Activated naive CD4-positive, alpha-beta T cell treated with anti-CD3 and anti-CD28 coated beads for 36 hours (primary cell): ENCODE measurements at regions of chr4 and their contacts with region 1.

Region 1: GRCh38 chr4:151760712-151761527 is at the start of gene GATB:
- DNase-seq: peak; percentile 95
- H3K4me3 Mint-ChIP-seq: peak within 1 kb of the TSS; percentile 99
- H3K27ac Mint-ChIP-seq: peak within 1 kb of the TSS; percentile 89
- H3K4me1 Mint-ChIP-seq: peaks cover 13% of the 10 kb centered on the region
- H3K27me3 Mint-ChIP-seq: no peaks in the 10 kb centered on the region
- total RNA-seq, gene GATB: 15.2 to 22.1 TPM

Region 2: GRCh38 chr4:151099229-151099975 is 661.5 kb before region 1 on chr4 and contains the start of gene RPS3A:
- CTCF ChIA-PET with region 1: no interaction called
- intact Hi-C with region 1: loop called (anchors 1 kb)
- DNase-seq: peak; percentile 97
- H3K4me3 Mint-ChIP-seq: peak within 1 kb of the TSS; percentile 96
- H3K27ac Mint-ChIP-seq: peak within 1 kb of the TSS; percentile 100
- H3K4me1 Mint-ChIP-seq: peaks cover 37% of the 10 kb centered on the region
- H3K27me3 Mint-ChIP-seq: peaks cover 4% of the 10 kb centered on the region
- total RNA-seq, gene RPS3A: 3,793 to 3,917 TPM

Region 3: GRCh38 chr4:151408630-151409469 is 352.1 kb before region 1 on chr4 and contains the start of gene FHIP1A:
- CTCF ChIA-PET with region 1: no interaction called
- intact Hi-C with region 1: loop called (anchors 2 kb)
- DNase-seq: peak; percentile 89
- H3K4me3 Mint-ChIP-seq: peak within 1 kb of the TSS; percentile 88
- H3K27ac Mint-ChIP-seq: peak within 1 kb of the TSS; percentile 60
- H3K4me1 Mint-ChIP-seq: peaks cover 22% of the 10 kb centered on the region
- H3K27me3 Mint-ChIP-seq: peaks cover 17% of the 10 kb centered on the region
- total RNA-seq, gene FHIP1A: 0.07 to 0.17 TPM

Region 4: GRCh38 chr4:151833174-151833573 is 72.3 kb after region 1 on chr4:
- CTCF ChIA-PET with region 1: no interaction called
- intact Hi-C with region 1: loop called (anchors 2 kb)
- DNase-seq: no peak
- H3K4me3 Mint-ChIP-seq: no peak overlapping the region
- H3K27ac Mint-ChIP-seq: no peak overlapping the region
- H3K4me1 Mint-ChIP-seq: peaks cover 27% of the 10 kb centered on the region
- H3K27me3 Mint-ChIP-seq: no peaks in the 10 kb centered on the region

Region 5: GRCh38 chr4:152100379-152101201 is 339.7 kb after region 1 on chr4:
- CTCF ChIA-PET with region 1: no interaction called
- intact Hi-C with region 1: loop called (anchors 5 kb)
- DNase-seq: peak; percentile 92
- H3K4me3 Mint-ChIP-seq: peak overlapping the region; percentile 71
- H3K27ac Mint-ChIP-seq: peak overlapping the region; percentile 98
- H3K4me1 Mint-ChIP-seq: peaks cover 88% of the 10 kb centered on the region
- H3K27me3 Mint-ChIP-seq: no peaks in the 10 kb centered on the region

Region 6: GRCh38 chr4:152559641-152560040 is 798.7 kb after region 1 on chr4:
- CTCF ChIA-PET with region 1: no interaction called
- intact Hi-C with region 1: loop called (anchors 1 kb)
- DNase-seq: no peak
- H3K4me3 Mint-ChIP-seq: no peak overlapping the region
- H3K27ac Mint-ChIP-seq: no peak overlapping the region
- H3K4me1 Mint-ChIP-seq: peaks cover 15% of the 10 kb centered on the region
- H3K27me3 Mint-ChIP-seq: no peaks in the 10 kb centered on the region